Activated CD4-positive, alpha-beta T cell treated with anti-CD3 and anti-CD28 coated beads for 36 hours (primary cell): ENCODE measurements at regions of chr5 and their contacts with region 1.

Region 1: DNA sequence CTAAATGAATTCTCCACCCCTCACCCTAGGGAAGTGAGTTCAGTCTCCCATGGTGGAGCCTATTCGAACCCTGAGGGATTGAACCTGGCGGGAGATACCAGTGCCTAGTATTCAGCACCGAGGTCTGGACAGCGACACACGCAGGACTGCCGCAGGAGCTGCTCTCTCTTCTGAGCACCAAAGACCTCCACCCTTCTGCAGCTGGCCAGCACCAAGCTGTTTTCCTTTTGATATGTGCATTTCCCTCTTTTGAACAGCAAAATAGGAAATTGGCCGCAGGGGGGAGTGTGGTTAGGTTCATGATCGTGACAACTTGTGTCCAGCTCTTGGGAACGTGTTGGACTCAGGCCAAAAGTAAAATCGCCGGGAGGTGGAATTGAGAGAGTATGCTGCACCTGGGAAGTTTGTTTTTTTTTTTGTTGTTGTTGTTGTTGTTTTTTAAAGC is 1.2 kb upstream of the PCSK1 start:
- DNase-seq: peak; percentile 79
- ATAC-seq: peak; percentile 76
- H3K4me3 Mint-ChIP-seq: no peak overlapping the region
- H3K27ac Mint-ChIP-seq: no peak overlapping the region
- H3K4me1 Mint-ChIP-seq: peaks cover 16% of the 10 kb centered on the region
- H3K27me3 Mint-ChIP-seq: peaks cover 58% of the 10 kb centered on the region

Region 2: DNA sequence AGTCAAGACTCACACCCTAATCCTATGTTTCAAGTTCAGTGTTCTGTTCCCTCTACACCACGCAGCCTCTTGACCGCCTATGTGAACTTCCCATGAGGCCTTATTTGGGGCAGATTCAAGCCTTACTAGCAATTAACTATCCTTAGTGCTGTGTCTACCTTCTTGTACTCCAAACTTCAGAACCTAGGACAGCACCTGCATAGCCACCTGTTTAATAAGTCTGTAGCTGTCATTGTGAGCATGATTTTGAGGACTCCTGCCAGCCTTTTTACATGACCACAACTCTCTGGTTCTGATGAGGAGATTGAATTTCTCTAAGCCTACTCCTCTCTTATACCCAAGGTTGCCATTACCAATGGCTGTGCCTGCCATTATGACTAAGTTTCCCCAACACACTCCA is 49.7 kb after region 1 on chr5:
- CTCF ChIA-PET with region 1: interaction called, 3 read pairs
- POLR2A ChIA-PET with region 1: no interaction called
- intact Hi-C with region 1: loop called in 1 of 2 experiments (anchors 5 kb)
- DNase-seq: peak; percentile 23
- ATAC-seq: no peak
- H3K4me3 Mint-ChIP-seq: no peak overlapping the region
- H3K27ac Mint-ChIP-seq: no peak overlapping the region
- H3K4me1 Mint-ChIP-seq: no peaks in the 10 kb centered on the region
- H3K27me3 Mint-ChIP-seq: peaks cover 8% of the 10 kb centered on the region